ENCODE measurements at regions of chr4 and their contacts with region 1.

Region 1: DNA sequence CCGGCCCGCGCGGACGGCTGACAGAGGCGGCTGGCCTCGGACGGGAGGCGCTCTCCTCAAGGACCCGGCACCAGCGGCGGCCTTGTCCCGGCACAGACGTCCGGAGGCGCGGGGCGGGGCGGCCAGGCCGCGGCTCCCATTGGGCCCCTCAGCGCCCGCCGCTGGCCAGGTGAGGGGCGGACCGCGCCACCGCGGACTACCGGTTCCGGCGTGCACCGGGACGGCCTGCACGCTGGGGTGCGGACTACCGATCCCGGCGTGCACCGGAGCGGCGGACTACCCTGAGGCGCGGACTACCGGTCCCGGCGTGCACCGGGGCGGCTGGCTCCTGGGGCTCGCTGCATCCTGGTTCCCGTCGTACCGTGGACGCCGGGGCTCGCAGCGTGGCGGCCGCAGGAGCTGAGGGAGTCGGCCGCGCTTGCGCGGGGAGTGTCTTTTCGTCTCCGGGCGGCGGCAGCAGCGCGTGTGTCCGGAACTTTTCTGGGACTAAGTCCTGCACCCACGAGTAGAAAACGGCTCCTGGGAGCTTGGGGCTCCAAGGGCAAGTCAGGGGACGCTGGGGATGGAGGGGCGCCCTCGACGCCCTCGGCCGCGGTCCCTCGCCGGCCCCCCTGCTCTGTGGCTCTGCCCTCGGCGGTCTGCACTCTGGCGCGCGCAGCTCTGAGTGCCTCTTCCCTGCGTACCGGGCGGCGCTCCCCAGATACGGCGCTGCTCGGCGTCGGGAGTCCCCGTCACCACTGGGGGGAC is at the start of gene LETM1:
- DNase-seq: peak; percentile 82 to 94 (median 86)
- ATAC-seq: peak; percentile 93 to 98
- H3K4me3 Mint-ChIP-seq: peak within 1 kb of the TSS; percentile 72 to 88 (median 82)
- H3K27ac Mint-ChIP-seq: peak within 1 kb of the TSS; percentile 37 to 91 (median 71)
- H3K4me1 Mint-ChIP-seq: peaks cover 21 to 49% (median 42%) of the 10 kb centered on the region in 4 donors
- H3K27me3 Mint-ChIP-seq: no peaks in the 10 kb centered on the region
- polyA plus RNA-seq, gene LETM1: 10.8 to 12.9 (median 11.1) TPM

Region 2: DNA sequence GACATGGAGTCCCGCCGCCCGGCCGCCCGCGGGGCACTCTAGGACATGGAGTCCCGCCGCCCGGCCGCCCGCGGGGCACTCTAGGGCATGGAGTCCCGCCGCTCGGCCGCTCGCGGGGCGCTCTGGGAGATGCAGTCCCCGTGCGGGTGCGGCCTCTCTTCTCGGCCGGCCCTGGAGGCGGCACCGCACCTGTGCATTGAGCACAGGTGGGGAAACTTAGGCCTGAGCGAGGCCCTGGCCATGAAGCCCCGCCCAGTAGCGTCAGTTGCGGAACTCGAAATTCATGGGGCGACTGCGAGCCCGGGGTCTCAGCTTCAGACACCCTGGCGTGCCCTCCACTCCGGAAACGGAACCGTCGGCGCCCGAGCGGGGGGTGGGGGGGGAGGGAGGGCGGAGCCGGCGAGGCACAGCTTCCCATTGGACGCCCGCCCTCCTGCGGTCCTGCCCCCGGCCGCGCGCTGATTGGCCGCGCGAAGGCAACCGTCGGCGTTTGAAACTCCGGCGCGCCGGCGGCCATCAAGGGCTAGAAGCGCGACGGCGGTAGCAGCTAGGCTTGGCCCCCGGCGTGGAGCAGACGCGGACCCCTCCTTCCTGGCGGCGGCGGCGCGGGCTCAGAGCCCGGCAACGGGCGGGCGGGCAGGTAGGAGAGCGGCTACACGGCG is 135.1 kb before region 1 on chr4 and contains the starts of genes TACC3 and TMEM129:
- POLR2A ChIA-PET with region 1: interaction called, 14 read pairs
- DNase-seq: peak; percentile 91 to 98 (median 96)
- ATAC-seq: peak; percentile 86 to 88
- H3K4me3 Mint-ChIP-seq: peak within 1 kb of the TSS; percentile 84 to 95 (median 91)
- H3K27ac Mint-ChIP-seq: peak within 1 kb of the TSS; percentile 96 to 100 (median 99)
- H3K4me1 Mint-ChIP-seq: peaks cover 24 to 65% (median 58%) of the 10 kb centered on the region in 4 donors
- H3K27me3 Mint-ChIP-seq: no peaks in the 10 kb centered on the region
- polyA plus RNA-seq, gene TACC3: 38.7 to 91.6 (median 61.2) TPM
- polyA plus RNA-seq, gene TMEM129: 26.9 to 41.7 (median 28.4) TPM

Region 3: DNA sequence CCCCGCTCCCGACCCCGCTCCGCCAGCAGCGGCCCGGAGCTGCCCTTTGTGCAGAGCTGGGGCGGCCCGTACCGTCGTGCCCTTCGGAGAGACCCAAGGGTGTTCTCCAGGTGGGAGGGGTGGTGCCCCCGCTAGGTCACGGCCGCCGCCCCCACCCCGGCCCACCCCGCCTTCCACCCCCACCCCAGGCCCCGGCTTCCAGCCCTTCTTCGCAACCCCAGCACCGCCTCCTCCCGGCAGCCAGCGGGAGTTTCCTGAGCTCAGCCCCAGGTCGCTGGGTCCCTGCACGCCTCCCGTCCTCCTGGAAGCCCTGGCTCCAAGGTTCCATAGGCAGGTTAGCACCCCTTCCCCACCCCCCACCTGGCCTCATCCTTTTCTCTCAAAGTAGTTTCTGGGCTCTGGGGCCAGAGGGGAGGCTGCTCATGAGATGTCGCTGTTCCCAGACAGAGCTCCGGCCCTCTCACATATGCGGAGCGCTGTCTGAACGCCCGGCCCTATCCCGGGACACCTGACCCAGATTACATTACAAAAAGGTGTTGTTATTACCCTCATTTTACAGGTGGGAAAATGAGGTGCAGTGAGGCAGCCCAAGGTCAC is 88.3 kb before region 1 on chr4:
- POLR2A ChIA-PET with region 1: no interaction called
- DNase-seq: peak in 1 of 10 donors; percentile 12
- ATAC-seq: peak; percentile 54
- H3K4me3 Mint-ChIP-seq: peak overlapping the region; percentile 39 to 84 (median 58)
- H3K27ac Mint-ChIP-seq: no peak overlapping the region
- H3K4me1 Mint-ChIP-seq: peaks cover 2 to 22% (median 8%) of the 10 kb centered on the region in 4 donors
- H3K27me3 Mint-ChIP-seq: peaks cover 2 to 34% (median 8%) of the 10 kb centered on the region in 5 donors

Region 4: DNA sequence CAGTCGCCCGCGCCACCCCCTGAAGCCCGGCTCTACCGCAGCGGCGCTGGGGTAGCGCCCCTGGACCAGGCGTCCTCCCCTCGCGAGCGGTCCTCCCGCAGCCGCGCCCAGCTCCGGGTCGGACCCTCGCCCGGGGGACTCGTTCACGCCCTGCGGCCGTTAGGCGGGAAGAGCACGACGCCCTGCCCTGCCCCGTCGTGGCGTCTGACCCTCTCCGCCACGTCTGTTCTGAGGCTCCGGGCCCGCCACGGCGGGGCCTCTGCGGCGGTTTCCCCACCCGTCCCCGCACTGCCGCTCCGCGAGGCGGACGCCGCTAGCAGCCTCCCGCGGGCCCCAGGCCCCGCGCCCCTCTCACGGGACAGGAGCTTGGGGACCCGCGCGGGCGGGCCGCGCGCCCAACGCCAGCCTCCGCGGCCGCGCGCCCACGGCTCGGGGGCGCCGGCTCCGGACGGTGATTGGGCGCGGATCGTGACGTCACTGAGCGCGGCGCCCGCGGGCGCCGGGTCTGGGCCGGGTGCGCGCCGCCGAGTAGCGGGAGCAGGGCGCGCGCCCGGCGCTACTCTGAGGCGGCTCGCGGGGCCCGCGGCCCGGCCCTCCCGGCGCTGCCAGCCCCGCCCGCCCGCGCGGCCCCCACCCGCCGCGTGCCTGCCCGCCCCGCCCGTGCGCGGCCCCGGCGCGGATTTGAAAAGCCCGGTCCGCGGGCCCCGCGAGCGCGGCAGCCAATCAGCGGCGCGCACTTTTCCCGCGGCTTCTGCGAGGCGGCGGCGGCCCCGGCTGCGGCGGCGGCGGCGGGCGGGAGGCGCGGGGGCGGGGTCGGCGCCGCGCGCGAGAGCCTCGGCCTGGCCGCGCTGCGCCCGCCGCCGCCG is 14.6 kb after region 1 on chr4 and contains the start of gene NSD2:
- POLR2A ChIA-PET with region 1: interaction called, 57 read pairs
- DNase-seq: peak; percentile 76 to 93 (median 88)
- ATAC-seq: peak; percentile 67 to 76
- H3K4me3 Mint-ChIP-seq: peak within 1 kb of the TSS; percentile 75 to 92 (median 87)
- H3K27ac Mint-ChIP-seq: peak within 1 kb of the TSS; percentile 90 to 98 (median 95)
- H3K4me1 Mint-ChIP-seq: peaks cover 9 to 35% (median 34%) of the 10 kb centered on the region in 4 donors
- H3K27me3 Mint-ChIP-seq: peaks cover 0 to 3% (median 0%) of the 10 kb centered on the region in 5 donors
- polyA plus RNA-seq, gene NSD2: 3.8 to 5.4 (median 3.9) TPM